ENCODE measurements at regions of chr2 and their contacts with region 1.

Region 1: DNA sequence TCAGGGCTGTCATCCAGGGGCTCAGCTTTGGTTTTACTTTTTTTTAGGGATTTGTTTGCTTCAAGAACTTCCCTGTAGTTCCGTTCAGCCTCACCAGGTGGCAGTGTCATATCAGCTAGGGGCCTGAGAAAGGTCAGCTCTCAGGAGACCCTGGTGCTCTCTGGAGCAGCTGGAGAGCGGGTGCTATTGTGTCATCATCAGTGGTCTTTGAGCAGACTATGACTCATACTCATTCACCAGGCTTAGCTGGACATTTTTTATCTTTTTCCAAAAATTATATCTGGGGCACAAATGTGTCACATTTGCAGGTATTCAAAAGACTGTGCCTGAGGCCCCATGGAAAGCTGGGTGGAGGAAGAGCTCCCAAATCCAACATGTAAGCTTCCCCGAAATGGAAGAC is 24.4 kb downstream of the ZNF892 start:
- DNase-seq: peak; percentile 94
- ATAC-seq: peak; percentile 91
- H3K4me3 Mint-ChIP-seq: no peak overlapping the region
- H3K27ac Mint-ChIP-seq: no peak overlapping the region
- H3K4me1 Mint-ChIP-seq: no peaks in the 10 kb centered on the region
- H3K27me3 Mint-ChIP-seq: no peaks in the 10 kb centered on the region
- CTCF ChIP-seq: peak; percentile 69

Region 2: GRCh38 chr2:95091885-95092555 is 139.7 kb before region 1 on chr2:
- CTCF ChIA-PET with region 1: no interaction called
- POLR2A ChIA-PET with region 1: no interaction called
- DNase-seq: no peak
- ATAC-seq: no peak
- H3K4me3 Mint-ChIP-seq: no peak overlapping the region
- H3K27ac Mint-ChIP-seq: no peak overlapping the region
- H3K4me1 Mint-ChIP-seq: peaks cover 14% of the 10 kb centered on the region
- H3K27me3 Mint-ChIP-seq: no peaks in the 10 kb centered on the region
- CTCF ChIP-seq: no peak

Region 3: GRCh38 chr2:95113464-95113863 is 118.3 kb before region 1 on chr2:
- CTCF ChIA-PET with region 1: no interaction called
- POLR2A ChIA-PET with region 1: no interaction called
- DNase-seq: no peak
- ATAC-seq: no peak
- H3K4me3 Mint-ChIP-seq: no peak overlapping the region
- H3K27ac Mint-ChIP-seq: no peak overlapping the region
- H3K4me1 Mint-ChIP-seq: peaks cover 9% of the 10 kb centered on the region
- H3K27me3 Mint-ChIP-seq: no peaks in the 10 kb centered on the region
- CTCF ChIP-seq: no peak

Region 4: GRCh38 chr2:95277246-95277906 is 45.7 kb after region 1 on chr2:
- CTCF ChIA-PET with region 1: interaction called, 60 read pairs
- POLR2A ChIA-PET with region 1: no interaction called
- DNase-seq: peak; percentile 65
- ATAC-seq: peak; percentile 62
- H3K4me3 Mint-ChIP-seq: no peak overlapping the region
- H3K27ac Mint-ChIP-seq: no peak overlapping the region
- H3K4me1 Mint-ChIP-seq: peaks cover 37% of the 10 kb centered on the region
- H3K27me3 Mint-ChIP-seq: no peaks in the 10 kb centered on the region
- CTCF ChIP-seq: no peak

Region 5: DNA sequence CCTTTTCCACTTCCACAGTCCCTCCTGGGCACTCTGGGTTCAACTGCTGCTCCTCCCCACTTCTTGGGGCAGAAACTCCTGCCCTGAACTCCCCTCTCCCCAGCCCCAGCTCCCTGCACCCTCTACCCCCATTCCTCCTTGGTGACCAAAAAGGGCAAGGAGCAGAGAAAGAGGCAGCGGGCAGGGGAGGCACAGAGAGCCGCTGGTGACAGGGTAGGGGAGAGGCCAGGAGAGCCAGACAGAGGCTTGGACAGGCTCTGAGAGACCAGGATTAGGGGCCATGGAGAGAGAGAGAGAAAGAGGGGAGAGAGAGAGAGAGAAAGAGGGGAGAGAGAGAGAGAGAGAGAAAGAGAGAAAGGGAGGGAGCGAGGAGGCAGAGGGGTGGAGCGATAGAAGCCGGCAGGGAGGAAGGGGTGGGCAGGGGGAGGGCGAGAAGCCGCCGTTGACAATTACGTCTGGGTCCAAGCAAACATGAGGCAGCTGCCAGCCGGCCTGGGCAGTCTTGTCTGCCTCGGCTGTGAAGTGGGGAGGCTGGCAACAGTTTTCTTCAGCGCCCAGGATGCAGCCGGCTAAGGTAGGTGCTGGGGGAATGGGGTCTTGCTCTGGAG is 65.3 kb after region 1 on chr2 and contains the start of gene KCNIP3:
- CTCF ChIA-PET with region 1: interaction called, 49 read pairs
- POLR2A ChIA-PET with region 1: no interaction called
- DNase-seq: peak; percentile 33
- ATAC-seq: peak; percentile 68
- H3K4me3 Mint-ChIP-seq: peak within 1 kb of the TSS; percentile 48
- H3K27ac Mint-ChIP-seq: no peak within 1 kb of the TSS
- H3K4me1 Mint-ChIP-seq: peaks cover 11% of the 10 kb centered on the region
- H3K27me3 Mint-ChIP-seq: no peaks in the 10 kb centered on the region; the same call in 1 of the 2 replicates
- CTCF ChIP-seq: no peak
- total RNA-seq, gene KCNIP3: 2.1 to 3.3 TPM (median 3.1 TPM) in 3 replicates

Region 6: GRCh38 chr2:95314964-95315611 is 83.4 kb after region 1 on chr2:
- CTCF ChIA-PET with region 1: interaction called, 107 read pairs
- POLR2A ChIA-PET with region 1: no interaction called
- DNase-seq: peak; percentile 71
- ATAC-seq: peak; percentile 84
- H3K4me3 Mint-ChIP-seq: no peak overlapping the region
- H3K27ac Mint-ChIP-seq: peak overlapping the region; percentile 61; the same call in 1 of the 2 replicates
- H3K4me1 Mint-ChIP-seq: peaks cover 3% of the 10 kb centered on the region
- H3K27me3 Mint-ChIP-seq: no peaks in the 10 kb centered on the region
- CTCF ChIP-seq: peak; percentile 68

Region 7: GRCh38 chr2:95329891-95330780 is 98.4 kb after region 1 on chr2:
- CTCF ChIA-PET with region 1: interaction called, 28 read pairs
- POLR2A ChIA-PET with region 1: no interaction called
- DNase-seq: no peak
- ATAC-seq: peak; percentile 23; the same call in 1 of the 2 replicates
- H3K4me3 Mint-ChIP-seq: no peak overlapping the region
- H3K27ac Mint-ChIP-seq: peak overlapping the region; percentile 10; the same call in 1 of the 2 replicates
- H3K4me1 Mint-ChIP-seq: 0 out of 2 replicates have a peak, but pooled peaks cover 2% of the 10 kb centered on the region
- H3K27me3 Mint-ChIP-seq: no peaks in the 10 kb centered on the region; the same call in 1 of the 2 replicates
- CTCF ChIP-seq: no peak

Region 8: DNA sequence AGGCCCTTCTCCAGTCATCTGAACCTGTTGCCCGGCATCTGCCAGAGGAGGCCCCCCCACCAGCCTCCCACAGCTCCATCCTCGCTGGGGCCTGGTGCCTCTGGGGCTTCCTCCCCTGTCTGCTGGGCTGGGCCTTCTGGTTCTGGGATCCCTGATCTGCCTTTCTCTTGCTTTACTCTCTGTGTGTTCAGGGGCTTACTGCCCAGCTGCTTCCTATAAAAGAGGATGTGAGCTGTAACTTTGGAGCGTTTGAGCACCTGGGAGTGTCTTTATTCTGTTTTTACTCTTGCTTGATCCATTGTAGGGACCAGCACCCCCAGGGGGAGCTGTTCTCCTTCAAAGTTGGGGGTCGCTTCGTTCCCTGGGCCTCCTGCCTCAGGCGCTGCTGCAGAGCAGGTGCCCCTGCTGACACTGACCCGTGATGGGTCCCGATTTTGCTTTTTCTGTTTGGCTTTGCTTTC is 147.7 kb after region 1 on chr2:
- CTCF ChIA-PET with region 1: interaction called, 13 read pairs
- POLR2A ChIA-PET with region 1: no interaction called
- DNase-seq: peak; percentile 66
- ATAC-seq: peak; percentile 84
- H3K4me3 Mint-ChIP-seq: no peak overlapping the region
- H3K27ac Mint-ChIP-seq: no peak overlapping the region
- H3K4me1 Mint-ChIP-seq: peaks cover 11% of the 10 kb centered on the region
- H3K27me3 Mint-ChIP-seq: no peaks in the 10 kb centered on the region
- CTCF ChIP-seq: 0 out of 2 replicates have a peak, but pooled peaks have one; percentile 33